GM18951 (cell line): ENCODE measurements at regions of chr4 and their contacts with region 1.

Region 1: DNA sequence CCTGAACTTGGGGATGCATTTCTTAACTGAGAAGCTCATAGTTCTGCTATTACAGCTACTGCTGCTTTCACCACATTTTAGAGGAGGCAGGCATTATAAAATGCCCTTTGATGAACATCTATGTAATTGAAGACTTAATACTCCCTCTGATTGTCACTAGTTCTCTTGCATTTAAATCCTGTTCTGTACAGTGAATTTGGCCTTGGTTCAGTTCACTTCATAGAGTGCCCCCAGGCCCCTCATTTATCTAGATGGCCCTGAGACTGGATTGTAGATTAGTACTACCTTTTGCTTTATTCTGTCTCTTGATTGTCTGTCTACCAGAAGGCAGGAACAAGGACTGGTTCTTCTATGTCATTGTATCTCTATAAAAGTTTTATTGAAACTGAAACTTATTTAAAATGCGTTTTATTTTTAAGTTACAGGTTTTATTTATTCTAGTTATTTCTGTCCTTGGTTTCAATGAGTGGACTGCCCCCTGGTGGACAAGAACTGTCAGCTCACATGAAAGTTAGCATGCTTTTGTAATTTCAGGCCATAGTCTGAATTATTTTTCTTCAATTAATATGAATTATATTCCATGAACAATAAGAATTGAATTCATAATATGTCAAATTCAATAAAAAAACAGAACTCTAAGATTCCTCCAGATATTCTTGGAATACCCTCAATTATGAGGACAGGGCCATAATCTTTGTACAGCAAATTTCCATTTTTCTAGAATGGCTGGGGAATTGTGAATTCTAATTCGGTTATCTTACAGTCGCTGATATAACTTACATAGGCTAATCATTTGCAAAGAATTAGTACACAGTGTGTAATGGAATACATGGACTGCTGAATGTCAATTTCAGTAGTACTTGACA is 47.2 kb upstream of the TMEM33 start:
- POLR2A ChIP-seq: no peak

Region 2: GRCh38 chr4:41323697-41324096 is 564.4 kb before region 1 on chr4:
- in situ Hi-C with region 1: no loop called
- POLR2A ChIP-seq: no peak

Region 3: DNA sequence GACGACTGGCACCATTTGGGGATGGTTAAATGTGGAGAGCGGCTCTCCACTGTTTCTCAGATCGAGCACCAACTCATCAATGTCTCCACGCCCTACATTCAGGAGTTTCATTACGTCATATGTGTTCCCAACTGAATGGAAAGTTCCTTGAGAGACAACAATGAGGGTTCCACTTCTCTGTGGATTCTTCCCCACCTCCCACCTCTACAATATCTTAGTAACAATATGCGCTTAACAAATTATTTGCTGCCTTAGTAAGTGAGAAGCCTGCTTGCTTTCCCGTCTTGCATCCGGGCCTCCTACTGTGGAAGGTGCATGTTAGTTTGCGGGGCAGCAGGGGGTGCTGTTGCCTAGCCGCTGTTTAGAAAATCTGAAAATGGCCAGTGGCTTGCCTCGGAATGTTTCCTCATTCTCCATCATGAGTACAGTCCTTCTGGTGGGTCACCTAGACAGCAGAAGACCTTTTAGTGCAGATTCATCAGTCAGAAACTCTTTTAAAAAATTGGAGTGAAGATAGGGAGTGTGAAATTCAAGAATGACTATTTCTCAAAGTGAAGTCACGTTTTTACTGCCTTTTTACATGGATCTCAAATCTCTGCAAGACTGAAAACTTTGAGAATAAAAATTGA is 195.2 kb before region 1 on chr4:
- in situ Hi-C with region 1: loop called (anchors 5 kb)
- POLR2A ChIP-seq: no peak